SK-N-SH (cell line): ENCODE measurements at regions of chr11 and their contacts with region 1.

Region 1: DNA sequence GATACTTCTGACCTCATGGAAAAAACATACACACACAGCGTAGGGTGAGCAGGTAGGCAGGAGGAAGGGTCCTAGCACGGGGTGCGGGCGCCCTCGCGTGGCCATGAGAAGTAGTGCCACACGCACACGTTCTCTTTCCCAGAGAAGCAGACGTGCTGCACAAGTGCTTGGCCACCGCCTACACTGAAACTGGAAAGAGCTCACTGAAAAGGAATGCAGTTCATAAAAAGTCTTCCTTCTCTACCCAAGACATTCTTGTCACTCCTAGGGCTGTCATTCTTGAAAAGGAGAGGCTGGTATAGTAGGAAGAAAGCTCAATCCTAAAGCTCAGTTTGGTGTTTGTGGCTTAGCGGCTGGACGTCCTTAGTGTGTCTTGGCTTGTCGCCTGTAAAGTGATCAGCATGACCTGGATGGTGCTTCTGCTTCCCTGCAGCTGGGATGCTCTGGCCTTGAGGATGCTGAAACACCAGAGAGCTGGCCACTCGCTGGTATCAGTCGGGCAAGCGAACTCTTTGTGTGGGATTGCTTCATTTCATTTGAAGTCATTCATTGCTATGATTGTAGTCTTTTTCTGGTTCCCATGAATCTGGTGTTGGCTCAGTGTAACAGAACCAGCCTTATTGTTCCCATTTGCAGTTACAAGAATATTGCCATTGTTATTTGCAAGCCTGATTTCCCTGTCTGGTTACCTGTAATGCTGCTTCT is 303.8 kb downstream of the NTM start:
- DNase-seq: peak; percentile 80
- H3K4me3 ChIP-seq: peak overlapping the region in 1 of 2 experiments; percentile 44; a peak in 1 of 4 replicates
- H3K27ac ChIP-seq: no peak overlapping the region
- H3K4me1 ChIP-seq: no peaks in the 10 kb centered on the region
- H3K27me3 ChIP-seq: no peaks in the 10 kb centered on the region; the same call in 1 of the 2 replicates
- CTCF ChIP-seq: peak; percentile 92
- EP300 ChIP-seq: no peak
- RAD21 ChIP-seq: peak; percentile 98

Region 2: GRCh38 chr11:130916238-130916855 is 757.9 kb before region 1 on chr11 and contains the start of gene SNX19:
- CTCF ChIA-PET with region 1: interaction called, 19 read pairs
- POLR2A ChIA-PET with region 1: no interaction called
- DNase-seq: peak; percentile 97
- H3K4me3 ChIP-seq: peak within 1 kb of the TSS; percentile 90 to 96
- H3K27ac ChIP-seq: peak within 1 kb of the TSS; percentile 68 to 73; a peak in 3 of 4 replicates
- H3K4me1 ChIP-seq: peaks cover 9 to 18% of the 10 kb centered on the region in 2 experiments
- H3K27me3 ChIP-seq: no peaks in the 10 kb centered on the region
- CTCF ChIP-seq: peak; percentile 85
- EP300 ChIP-seq: peak in 1 of 2 experiments; percentile 29; a peak in 1 of 4 replicates
- RAD21 ChIP-seq: no peak
- polyA plus RNA-seq, gene SNX19: 16.6 and 21.9 TPM in 2 replicates

Region 3: DNA sequence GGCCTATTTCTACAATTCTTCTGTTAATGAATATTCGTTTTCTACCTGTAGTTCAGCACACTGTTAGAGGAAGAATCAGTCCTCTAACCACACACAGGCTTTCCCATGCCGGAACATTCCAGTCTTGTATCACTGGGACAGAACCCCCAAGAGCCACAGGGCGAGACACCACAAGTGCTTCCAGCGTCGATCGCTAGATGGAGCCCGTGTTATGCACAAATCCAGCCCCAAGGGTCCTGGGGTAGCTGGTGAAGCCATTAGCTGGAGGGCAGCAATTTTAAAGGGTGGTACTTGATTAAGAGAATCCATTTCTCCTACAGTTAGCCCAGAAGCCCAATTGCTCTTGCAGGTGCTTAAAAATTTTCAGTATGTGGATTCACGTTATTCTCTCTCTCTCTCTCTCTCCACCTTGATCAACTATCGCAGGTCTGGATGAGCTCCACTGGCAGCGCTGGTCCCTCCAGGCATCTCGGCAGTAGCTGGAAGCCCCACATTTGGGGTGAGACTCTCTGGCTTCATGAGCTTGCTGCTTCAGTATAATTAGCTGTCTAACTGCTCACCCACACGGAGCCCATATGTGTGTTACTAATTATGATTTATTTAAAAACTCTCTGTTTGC is 609.7 kb before region 1 on chr11:
- CTCF ChIA-PET with region 1: interaction called, 87 read pairs
- POLR2A ChIA-PET with region 1: no interaction called
- DNase-seq: peak; percentile 80
- H3K4me3 ChIP-seq: peak overlapping the region in 1 of 2 experiments; percentile 19; a peak in 1 of 4 replicates
- H3K27ac ChIP-seq: no peak overlapping the region
- H3K4me1 ChIP-seq: no peaks in the 10 kb centered on the region
- H3K27me3 ChIP-seq: no peaks in the 10 kb centered on the region
- CTCF ChIP-seq: peak; percentile 53
- EP300 ChIP-seq: no peak
- RAD21 ChIP-seq: peak; percentile 88

Region 4: DNA sequence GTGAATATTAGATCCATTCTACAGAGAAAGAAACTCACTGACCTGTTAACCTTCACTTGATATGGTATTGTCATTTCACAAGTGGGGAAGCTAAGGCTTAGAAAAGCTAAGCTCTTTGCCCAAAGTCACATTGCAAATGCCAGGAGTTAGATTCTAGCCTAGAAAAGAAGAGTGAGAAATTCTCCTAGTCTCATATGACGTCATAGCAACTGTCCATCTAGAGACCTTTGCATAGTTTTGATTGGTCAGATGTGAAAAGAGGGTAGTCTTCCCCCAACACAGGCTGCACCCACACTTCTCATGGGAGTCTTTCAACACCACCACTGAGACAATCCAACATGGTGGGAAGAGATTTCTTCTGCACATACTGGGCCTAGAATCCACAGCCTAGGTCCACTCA is 105.9 kb before region 1 on chr11:
- CTCF ChIA-PET with region 1: interaction called, 11 read pairs
- POLR2A ChIA-PET with region 1: no interaction called
- DNase-seq: no peak
- H3K4me3 ChIP-seq: no peak overlapping the region
- H3K27ac ChIP-seq: no peak overlapping the region
- H3K4me1 ChIP-seq: no peaks in the 10 kb centered on the region
- H3K27me3 ChIP-seq: no peaks in the 10 kb centered on the region
- CTCF ChIP-seq: no peak
- EP300 ChIP-seq: no peak
- RAD21 ChIP-seq: no peak

Region 5: DNA sequence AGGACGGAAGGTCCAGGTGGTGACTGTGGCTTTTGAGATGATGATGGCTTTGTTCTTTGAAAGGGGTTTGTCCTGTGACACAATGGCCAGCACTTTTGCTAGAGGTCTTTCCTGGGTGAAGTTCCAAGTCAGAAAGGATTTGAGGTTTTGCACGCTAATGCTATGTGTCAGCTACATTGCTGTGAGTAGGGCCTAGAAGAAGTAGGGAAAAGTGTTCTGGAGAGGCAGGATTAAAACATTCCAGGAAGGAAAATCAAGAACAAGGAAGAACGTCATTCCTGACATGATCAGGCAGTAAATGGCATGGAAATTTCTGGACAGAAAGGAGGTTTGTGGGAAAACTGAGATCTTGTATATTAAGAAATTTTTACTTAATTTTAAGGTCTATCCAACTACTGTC is 13.1 kb before region 1 on chr11:
- CTCF ChIA-PET with region 1: interaction called, 26 read pairs
- POLR2A ChIA-PET with region 1: no interaction called
- DNase-seq: no peak
- H3K4me3 ChIP-seq: no peak overlapping the region
- H3K27ac ChIP-seq: no peak overlapping the region
- H3K4me1 ChIP-seq: no peaks in the 10 kb centered on the region
- H3K27me3 ChIP-seq: no peaks in the 10 kb centered on the region
- CTCF ChIP-seq: no peak
- EP300 ChIP-seq: no peak
- RAD21 ChIP-seq: no peak

Region 6: DNA sequence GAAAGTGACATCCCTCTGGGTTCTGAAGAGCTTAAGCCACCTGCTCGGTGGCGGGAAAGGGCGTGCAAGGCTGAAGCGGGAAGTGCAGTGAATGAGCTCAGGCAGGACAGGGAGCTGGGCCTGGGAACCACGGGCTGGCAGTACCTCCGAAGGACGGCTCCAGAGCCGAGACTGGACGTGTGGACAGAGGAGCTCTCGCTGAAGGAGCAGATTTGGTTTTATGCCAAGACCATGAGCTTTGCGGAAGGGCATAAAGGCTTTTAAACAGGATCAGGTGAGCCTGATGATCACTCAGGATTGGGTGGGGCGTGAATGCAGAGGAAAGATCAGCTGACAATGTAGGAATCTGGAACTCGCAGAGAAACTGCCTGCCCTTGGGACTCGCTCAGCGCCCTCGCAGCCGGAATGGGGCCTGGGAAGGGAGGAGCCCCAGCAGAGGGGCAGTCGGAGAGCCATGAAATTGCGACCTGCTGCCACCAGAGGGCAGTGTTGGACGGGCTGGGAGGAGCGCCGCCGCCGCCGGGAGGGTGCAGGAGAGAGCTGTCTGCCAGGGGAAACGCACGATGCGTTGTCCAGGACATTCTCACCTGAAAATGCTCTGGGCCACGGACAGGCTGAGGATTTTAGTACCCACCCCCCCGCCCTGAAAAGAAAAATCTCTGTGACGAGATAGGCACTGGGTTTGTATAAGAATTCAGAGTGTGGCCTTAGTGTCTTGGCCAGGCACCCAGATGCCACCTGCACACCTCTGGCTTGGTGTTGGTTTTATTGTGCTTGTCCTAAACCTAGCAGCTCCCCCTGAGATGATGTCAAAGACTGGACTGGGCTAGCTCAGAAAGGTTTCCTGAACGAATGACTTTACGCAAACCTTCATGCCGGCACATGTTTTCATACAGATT is 20.6 kb after region 1 on chr11:
- CTCF ChIA-PET with region 1: interaction called, 26 read pairs
- POLR2A ChIA-PET with region 1: no interaction called
- DNase-seq: peak; percentile 86
- H3K4me3 ChIP-seq: no peak overlapping the region; a peak in 1 of 4 replicates
- H3K27ac ChIP-seq: no peak overlapping the region
- H3K4me1 ChIP-seq: peaks cover 0 to 7% of the 10 kb centered on the region in 2 experiments; a peak in 1 of 4 replicates
- H3K27me3 ChIP-seq: no peaks in the 10 kb centered on the region
- CTCF ChIP-seq: peak; percentile 84
- EP300 ChIP-seq: no peak
- RAD21 ChIP-seq: peak; percentile 76

Region 7: DNA sequence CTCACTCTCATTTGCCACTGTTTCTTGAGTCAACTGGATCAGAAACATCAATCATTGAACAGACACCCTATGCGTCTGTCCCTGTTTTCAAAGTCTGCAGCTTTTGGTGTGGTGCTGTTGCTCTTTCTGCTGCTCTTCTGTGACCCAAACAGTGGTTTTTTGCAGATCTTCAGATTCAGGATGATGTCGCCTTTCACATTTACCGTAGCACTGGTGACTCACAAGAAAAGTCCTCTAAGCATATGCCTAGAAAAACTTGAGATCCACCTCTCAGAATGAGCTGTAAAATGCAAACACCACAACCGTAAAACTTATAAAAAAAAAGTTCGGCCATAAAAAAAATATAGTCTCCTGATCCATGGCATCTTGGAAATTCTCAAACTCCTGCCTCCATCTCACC is 96.6 kb after region 1 on chr11:
- CTCF ChIA-PET with region 1: no interaction called
- POLR2A ChIA-PET with region 1: no interaction called
- DNase-seq: no peak
- H3K4me3 ChIP-seq: no peak overlapping the region
- H3K27ac ChIP-seq: peak overlapping the region in 1 of 2 experiments; percentile 38; a peak in 1 of 4 replicates
- H3K4me1 ChIP-seq: peaks cover 0 to 16% of the 10 kb centered on the region in 2 experiments; a peak in 1 of 4 replicates
- H3K27me3 ChIP-seq: no peaks in the 10 kb centered on the region
- CTCF ChIP-seq: no peak
- EP300 ChIP-seq: no peak
- RAD21 ChIP-seq: no peak